ENCODE measurements at regions of chr3 and their contacts with region 1.

Region 1: GRCh38 chr3:27228805-27229204 is 140.4 kb downstream of the NEK10 start:
- DNase-seq: peak; percentile 44
- ATAC-seq: peak; percentile 100
- H3K4me3 Mint-ChIP-seq: no peak overlapping the region
- H3K27ac Mint-ChIP-seq: no peak overlapping the region
- H3K4me1 Mint-ChIP-seq: no peaks in the 10 kb centered on the region; the same call in 1 of the 2 replicates
- H3K27me3 Mint-ChIP-seq: no peaks in the 10 kb centered on the region; the same call in 1 of the 2 replicates
- CTCF ChIP-seq: peak; percentile 63

Region 2: GRCh38 chr3:27134165-27134796 is 94.5 kb before region 1 on chr3:
- CTCF ChIA-PET with region 1: interaction called, 10 read pairs
- POLR2A ChIA-PET with region 1: no interaction called
- DNase-seq: peak; percentile 76
- ATAC-seq: peak; percentile 94
- H3K4me3 Mint-ChIP-seq: no peak overlapping the region
- H3K27ac Mint-ChIP-seq: no peak overlapping the region
- H3K4me1 Mint-ChIP-seq: no peaks in the 10 kb centered on the region
- H3K27me3 Mint-ChIP-seq: no peaks in the 10 kb centered on the region
- CTCF ChIP-seq: peak; percentile 74

Region 3: DNA sequence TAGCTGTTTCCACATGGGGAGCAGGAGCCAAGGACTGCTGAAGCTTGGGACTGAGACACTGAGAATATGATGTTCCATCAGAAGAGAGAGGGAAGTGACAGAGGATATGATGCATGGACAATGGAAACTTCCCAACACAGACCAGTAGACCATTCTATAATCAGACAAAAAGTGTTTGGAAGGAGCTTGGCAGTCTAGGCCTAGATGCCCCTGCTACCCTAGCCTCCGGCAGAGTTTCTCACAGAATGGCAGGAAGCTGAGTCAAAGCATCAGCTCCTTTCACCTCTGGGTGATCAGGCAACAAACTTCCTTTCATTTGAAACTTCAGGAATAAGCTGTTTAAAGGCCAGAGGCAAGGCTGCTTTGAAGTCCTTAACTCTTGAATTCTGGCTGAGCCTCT is 81.6 kb before region 1 on chr3:
- CTCF ChIA-PET with region 1: interaction called, 17 read pairs
- POLR2A ChIA-PET with region 1: no interaction called
- DNase-seq: no peak
- ATAC-seq: no peak
- H3K4me3 Mint-ChIP-seq: no peak overlapping the region
- H3K27ac Mint-ChIP-seq: no peak overlapping the region
- H3K4me1 Mint-ChIP-seq: peaks cover 2% of the 10 kb centered on the region; the same call in 1 of the 2 replicates
- H3K27me3 Mint-ChIP-seq: no peaks in the 10 kb centered on the region
- CTCF ChIP-seq: no peak

Region 4: DNA sequence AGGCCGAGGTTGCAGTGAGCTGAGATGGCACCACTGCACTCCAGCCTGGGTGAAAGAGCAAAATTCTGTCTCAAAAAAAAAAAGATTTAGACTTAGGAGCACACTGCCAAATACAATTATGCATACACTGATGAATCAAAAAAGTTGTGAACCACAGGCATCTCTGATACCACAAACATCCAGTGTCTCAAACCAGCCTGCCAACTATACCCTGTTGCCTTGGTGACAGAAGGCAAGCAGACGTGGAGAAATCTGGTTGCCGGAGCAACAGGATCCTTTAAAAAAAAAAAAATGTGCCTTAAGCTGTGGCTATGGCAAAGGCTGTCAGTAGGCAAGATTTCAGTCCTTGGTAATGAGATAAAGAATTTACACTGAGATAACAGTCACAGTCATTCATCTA is 61.9 kb before region 1 on chr3:
- CTCF ChIA-PET with region 1: interaction called, 13 read pairs
- POLR2A ChIA-PET with region 1: no interaction called
- DNase-seq: no peak
- ATAC-seq: no peak
- H3K4me3 Mint-ChIP-seq: no peak overlapping the region
- H3K27ac Mint-ChIP-seq: no peak overlapping the region
- H3K4me1 Mint-ChIP-seq: no peaks in the 10 kb centered on the region
- H3K27me3 Mint-ChIP-seq: no peaks in the 10 kb centered on the region
- CTCF ChIP-seq: no peak

Region 5: GRCh38 chr3:27213450-27213849 is 15.4 kb before region 1 on chr3:
- CTCF ChIA-PET with region 1: interaction called, 12 read pairs
- POLR2A ChIA-PET with region 1: no interaction called
- DNase-seq: no peak
- ATAC-seq: peak; percentile 92
- H3K4me3 Mint-ChIP-seq: 0 out of 2 replicates have a peak overlapping the region, but pooled peaks have one; percentile 21
- H3K27ac Mint-ChIP-seq: peak overlapping the region; percentile 67
- H3K4me1 Mint-ChIP-seq: peaks cover 48% of the 10 kb centered on the region
- H3K27me3 Mint-ChIP-seq: no peaks in the 10 kb centered on the region
- CTCF ChIP-seq: no peak

Region 6: DNA sequence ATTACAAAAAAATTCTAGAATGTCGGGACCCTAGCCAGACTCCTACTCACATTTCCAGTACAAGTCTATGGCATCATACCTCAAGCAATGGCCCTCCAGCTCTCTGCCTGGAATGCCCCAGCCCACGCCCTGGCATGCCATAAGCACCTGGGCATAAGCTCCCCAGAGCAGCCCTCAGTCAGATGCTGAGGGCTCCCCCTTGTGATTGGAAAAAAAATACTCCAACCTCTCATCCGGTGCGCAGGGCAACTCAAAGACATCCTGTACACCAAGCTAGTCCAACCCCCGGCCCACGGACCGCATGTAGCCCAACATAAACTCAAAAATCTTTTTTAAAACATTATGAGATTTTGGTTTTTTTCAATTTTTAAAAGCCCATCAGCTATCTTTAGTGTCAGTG is 25.0 kb after region 1 on chr3:
- CTCF ChIA-PET with region 1: interaction called, 23 read pairs
- POLR2A ChIA-PET with region 1: no interaction called
- DNase-seq: peak; percentile 57
- ATAC-seq: peak; percentile 100
- H3K4me3 Mint-ChIP-seq: no peak overlapping the region
- H3K27ac Mint-ChIP-seq: no peak overlapping the region
- H3K4me1 Mint-ChIP-seq: no peaks in the 10 kb centered on the region
- H3K27me3 Mint-ChIP-seq: no peaks in the 10 kb centered on the region
- CTCF ChIP-seq: no peak